ENCODE measurements at regions of chr16 and their contacts with region 1.

Region 1: DNA sequence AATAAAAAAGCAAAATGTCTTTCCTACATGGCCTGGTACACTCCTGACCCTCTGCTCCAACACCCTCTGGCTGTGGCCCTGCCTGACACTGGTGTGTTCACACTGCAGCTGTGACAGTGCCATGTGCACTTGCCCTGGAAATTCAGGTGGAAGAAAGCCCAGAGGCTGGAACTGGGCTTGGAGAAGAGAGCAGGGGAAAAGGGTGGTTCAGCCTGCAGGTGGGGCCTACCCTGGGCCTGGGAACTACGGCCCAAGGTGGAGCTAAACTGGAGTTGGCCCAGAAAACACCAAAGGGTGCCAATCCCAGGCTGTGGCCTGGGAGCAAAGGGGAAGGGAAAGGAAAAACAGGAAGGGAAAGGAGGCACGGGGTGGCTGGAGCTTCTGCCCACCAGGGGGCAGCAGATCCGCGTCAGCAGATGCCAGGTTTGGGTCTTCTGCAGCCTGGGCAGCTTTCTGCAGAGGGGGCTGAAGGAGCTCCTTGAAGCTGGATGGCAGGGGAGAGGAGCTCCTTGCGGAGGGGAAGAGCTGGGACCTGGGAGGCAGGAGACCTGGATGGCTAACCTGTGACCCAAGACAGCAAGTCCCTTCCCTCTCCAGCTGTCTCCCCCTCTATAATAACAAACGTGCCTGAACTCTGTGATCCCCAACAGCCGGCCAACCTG is 15.4 kb upstream of the CTCF start:
- DNase-seq: peak; percentile 79 to 81
- H3K4me3 ChIP-seq: no peak overlapping the region
- H3K27ac ChIP-seq: peak overlapping the region; percentile 2 to 30 (median 11)
- H3K4me1 ChIP-seq: peaks cover 6 to 42% of the 10 kb centered on the region in 2 donors
- H3K27me3 ChIP-seq: no peaks in the 10 kb centered on the region
- CTCF ChIP-seq: peak; percentile 73 to 94 (median 89)
- POLR2A ChIP-seq: peak in 1 of 2 donors; percentile 5

Region 2: DNA sequence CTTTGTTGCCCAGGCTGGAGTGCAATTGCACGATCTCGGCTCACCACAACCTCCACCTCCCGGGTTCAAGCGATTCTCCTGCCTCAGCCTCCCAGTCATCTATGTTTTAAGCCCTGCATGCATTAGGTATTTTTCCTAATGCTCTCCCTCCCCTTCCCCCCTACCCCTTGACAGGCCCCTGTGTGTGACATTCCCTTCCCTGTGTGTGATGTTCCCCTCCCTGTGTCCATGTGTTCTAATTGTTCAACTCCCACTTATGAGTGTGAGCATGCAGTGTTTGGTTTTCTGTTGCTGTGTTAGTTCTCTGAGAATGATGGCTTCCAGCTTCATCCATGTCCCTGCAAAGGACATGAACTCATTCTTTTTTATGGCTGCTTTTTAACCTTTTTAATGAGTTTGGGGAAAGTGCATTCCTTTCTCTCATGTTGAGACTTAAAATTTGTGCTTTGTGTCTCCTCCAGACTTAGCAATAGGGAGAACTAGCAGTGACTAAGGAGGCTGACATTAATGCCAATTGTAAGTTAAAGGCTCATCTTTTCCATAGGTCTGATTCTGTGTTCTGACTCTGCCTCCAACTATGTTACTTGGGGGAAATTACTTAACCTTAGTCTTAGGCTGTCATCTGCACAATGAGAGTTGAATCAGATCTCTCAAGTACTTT is 454.9 kb before region 1 on chr16:
- intact Hi-C with region 1: no loop called
- DNase-seq: no peak
- H3K4me3 ChIP-seq: no peak overlapping the region
- H3K27ac ChIP-seq: no peak overlapping the region
- H3K4me1 ChIP-seq: no peaks in the 10 kb centered on the region
- H3K27me3 ChIP-seq: no peaks in the 10 kb centered on the region
- CTCF ChIP-seq: no peak
- POLR2A ChIP-seq: no peak

Region 3: DNA sequence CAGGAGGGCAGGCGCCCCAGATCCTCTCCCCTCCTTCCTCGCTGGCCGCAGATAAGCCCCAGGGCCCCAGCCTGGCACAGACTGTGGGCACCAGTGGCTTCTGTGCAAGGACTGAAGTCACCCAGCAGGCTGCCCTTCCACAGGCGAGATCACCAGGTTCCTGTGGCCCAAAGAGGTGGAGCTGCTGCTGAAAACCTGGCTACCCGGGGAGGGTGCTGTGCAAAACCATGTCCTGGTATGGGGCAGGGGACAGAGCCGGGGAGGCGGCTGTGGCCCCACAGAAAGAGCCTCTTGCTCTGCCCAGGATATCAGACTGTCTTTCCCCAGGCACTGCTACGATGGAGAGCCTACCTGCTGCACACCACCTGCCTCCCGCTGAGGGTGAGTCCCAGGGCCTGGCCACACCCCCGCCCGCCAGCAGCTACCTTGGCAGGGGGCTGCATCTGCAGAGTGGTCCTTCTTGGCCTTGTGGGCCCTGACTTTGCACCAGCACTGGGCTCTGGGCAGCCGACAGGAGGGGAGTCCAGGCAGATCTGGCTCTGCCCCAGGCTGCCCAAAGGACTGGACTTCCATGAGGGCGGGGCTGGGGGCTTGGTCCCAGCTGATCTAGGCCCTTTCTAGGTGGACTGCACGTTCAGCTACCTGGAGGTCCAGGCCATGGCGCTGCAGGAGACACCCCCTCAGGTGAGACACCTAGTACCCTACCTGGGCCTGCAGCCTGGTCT is 98.7 kb after region 1 on chr16:
- intact Hi-C with region 1: loop called (anchors 5 kb)
- DNase-seq: no peak
- H3K4me3 ChIP-seq: no peak overlapping the region
- H3K27ac ChIP-seq: no peak overlapping the region
- H3K4me1 ChIP-seq: peaks cover 9 to 36% of the 10 kb centered on the region in 2 donors
- H3K27me3 ChIP-seq: peaks cover 17% of the 10 kb centered on the region
- CTCF ChIP-seq: no peak
- POLR2A ChIP-seq: no peak

Region 4: DNA sequence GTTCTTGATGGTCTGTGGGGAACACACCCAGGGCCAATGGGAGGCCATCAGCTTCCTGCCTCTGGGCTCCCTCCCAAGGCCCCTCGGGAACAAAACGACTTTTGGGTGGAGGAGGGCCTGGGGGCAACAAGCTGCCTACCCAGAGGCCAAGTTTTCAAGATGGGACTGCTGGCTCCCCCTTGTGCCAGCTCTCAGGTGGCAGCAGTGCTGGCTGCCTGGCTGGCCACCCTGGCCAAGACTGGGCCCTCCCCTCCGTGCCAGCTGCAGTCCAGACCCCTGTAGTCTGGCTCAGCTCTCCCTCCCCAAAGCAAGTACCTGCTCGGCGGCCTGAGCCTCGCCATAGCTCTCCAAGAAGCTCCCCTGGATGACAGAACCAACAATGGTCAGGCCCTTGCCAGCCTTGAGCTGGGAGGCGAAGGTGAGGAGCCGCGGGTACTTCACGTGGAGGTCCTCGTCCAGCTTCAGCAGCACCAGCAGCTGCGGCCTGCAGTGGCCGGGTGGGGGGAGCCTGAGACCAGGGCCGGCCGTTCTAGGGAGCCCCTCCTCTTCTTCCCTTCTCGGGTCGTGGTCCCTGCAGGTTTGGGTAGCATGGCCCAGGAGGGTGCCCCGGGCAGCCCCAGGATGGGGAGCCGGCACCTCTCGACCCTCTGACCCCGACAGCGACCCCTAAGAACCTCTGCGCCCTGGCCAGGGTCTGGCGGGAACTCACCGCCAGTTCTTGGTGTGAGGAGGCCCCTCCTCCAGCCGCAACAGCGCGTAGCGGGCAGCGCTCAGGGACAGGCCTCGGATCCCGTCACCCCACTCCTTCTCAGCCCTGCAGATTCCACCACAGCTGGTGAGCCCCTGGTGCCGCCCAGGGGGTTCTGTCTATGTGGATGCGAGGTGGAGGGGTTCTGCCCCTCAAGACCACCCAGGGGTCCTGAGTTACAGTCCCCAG is 400.0 kb after region 1 on chr16:
- intact Hi-C with region 1: loop called (anchors 5 kb)
- DNase-seq: no peak
- H3K4me3 ChIP-seq: no peak overlapping the region
- H3K27ac ChIP-seq: no peak overlapping the region
- H3K4me1 ChIP-seq: peaks cover 0 to 14% of the 10 kb centered on the region in 2 donors
- H3K27me3 ChIP-seq: no peaks in the 10 kb centered on the region
- CTCF ChIP-seq: no peak
- POLR2A ChIP-seq: no peak

Measured in thyroid gland (tissue), 4 donors.